ENCODE measurements at regions of chr7 and their contacts with region 1.

Region 1: GRCh38 chr7:123748734-123749536 is at the start of gene WASL:
- DNase-seq: peak; percentile 80 to 94 (median 88)
- H3K4me3 ChIP-seq: peak within 1 kb of the TSS; percentile 64 to 98 (median 89)
- H3K27ac ChIP-seq: peak within 1 kb of the TSS; percentile 61 to 99 (median 95)
- H3K27me3 ChIP-seq: no peaks in the 10 kb centered on the region
- CTCF ChIP-seq: peak in 51 of 56 donors; percentile 15 to 86 (median 54)
- total RNA-seq, gene WASL: 41.1 to 88.3 (median 68.7) TPM

Region 2: DNA sequence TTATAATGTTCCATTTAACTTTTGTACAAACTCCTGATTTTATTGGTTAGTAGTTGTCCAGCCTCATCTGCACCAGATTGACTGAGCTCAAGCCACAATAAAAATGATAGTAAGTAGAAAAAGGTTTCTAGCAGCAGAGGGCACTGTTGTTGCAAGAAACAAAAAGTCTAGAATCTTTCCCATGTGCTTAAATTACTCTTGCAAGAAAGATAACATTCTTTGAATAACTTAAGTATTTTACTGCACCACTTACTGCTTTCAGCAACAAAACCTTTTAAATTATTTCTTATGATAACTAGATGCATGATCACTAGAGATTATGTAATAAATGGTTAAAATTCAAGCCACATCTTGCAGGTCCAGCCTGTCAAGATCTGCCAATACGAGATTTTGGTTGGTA is 66.2 kb before region 1 on chr7:
- intact Hi-C with region 1: loop called in 1 of 2 experiments (anchors 2 kb)
- DNase-seq: no peak
- H3K4me3 ChIP-seq: no peak overlapping the region
- H3K27ac ChIP-seq: no peak overlapping the region
- H3K27me3 ChIP-seq: no peaks in the 10 kb centered on the region
- CTCF ChIP-seq: peak; percentile 38 to 83 (median 61)

Region 3: GRCh38 chr7:123987440-123987839 is 238.5 kb after region 1 on chr7:
- intact Hi-C with region 1: no loop called
- DNase-seq: no peak
- H3K4me3 ChIP-seq: no peak overlapping the region
- H3K27ac ChIP-seq: no peak overlapping the region
- H3K27me3 ChIP-seq: peaks cover 0 to 5% (median 0%) of the 10 kb centered on the region in 45 donors
- CTCF ChIP-seq: no peak

Measured in dorsolateral prefrontal cortex (tissue), 120 donors.